ENCODE measurements at regions of chr1 and their contacts with region 1.

Region 1: GRCh38 chr1:63821091-63822005 is 47.5 kb downstream of the ROR1 start:
- DNase-seq: no peak
- H3K4me3 ChIP-seq: no peak overlapping the region
- H3K27ac ChIP-seq: peak overlapping the region; percentile 4 to 25
- H3K4me1 ChIP-seq: peaks cover 0 to 54% (median 18%) of the 10 kb centered on the region in 4 donors
- H3K27me3 ChIP-seq: no peaks in the 10 kb centered on the region
- CTCF ChIP-seq: no peak

Region 2: GRCh38 chr1:63892632-63893395 is 71.5 kb after region 1 on chr1:
- intact Hi-C with region 1: no loop called
- DNase-seq: peak in 1 of 2 donors; percentile 39
- H3K4me3 ChIP-seq: no peak overlapping the region
- H3K27ac ChIP-seq: peak overlapping the region; percentile 55 to 61
- H3K4me1 ChIP-seq: peaks cover 0 to 57% (median 8%) of the 10 kb centered on the region in 4 donors
- H3K27me3 ChIP-seq: no peaks in the 10 kb centered on the region
- CTCF ChIP-seq: no peak

Region 3: GRCh38 chr1:64042331-64043100 is 221.2 kb after region 1 on chr1:
- intact Hi-C with region 1: no loop called
- DNase-seq: peak; percentile 58 to 72
- H3K4me3 ChIP-seq: no peak overlapping the region
- H3K27ac ChIP-seq: peak overlapping the region; percentile 76 to 83
- H3K4me1 ChIP-seq: peaks cover 0 to 81% (median 46%) of the 10 kb centered on the region in 4 donors
- H3K27me3 ChIP-seq: no peaks in the 10 kb centered on the region
- CTCF ChIP-seq: no peak

Region 4: GRCh38 chr1:64082459-64082858 is 261.1 kb after region 1 on chr1:
- intact Hi-C with region 1: loop called (anchors 5 kb)
- DNase-seq: no peak
- H3K4me3 ChIP-seq: no peak overlapping the region
- H3K27ac ChIP-seq: no peak overlapping the region
- H3K4me1 ChIP-seq: peaks cover 0 to 68% (median 24%) of the 10 kb centered on the region in 4 donors
- H3K27me3 ChIP-seq: no peaks in the 10 kb centered on the region
- CTCF ChIP-seq: no peak

Measured in tibial artery (tissue), 4 donors.